Heart right ventricle (tissue), 16 donors: ENCODE measurements at regions of chrX and their contacts with region 1.

Region 1: DNA sequence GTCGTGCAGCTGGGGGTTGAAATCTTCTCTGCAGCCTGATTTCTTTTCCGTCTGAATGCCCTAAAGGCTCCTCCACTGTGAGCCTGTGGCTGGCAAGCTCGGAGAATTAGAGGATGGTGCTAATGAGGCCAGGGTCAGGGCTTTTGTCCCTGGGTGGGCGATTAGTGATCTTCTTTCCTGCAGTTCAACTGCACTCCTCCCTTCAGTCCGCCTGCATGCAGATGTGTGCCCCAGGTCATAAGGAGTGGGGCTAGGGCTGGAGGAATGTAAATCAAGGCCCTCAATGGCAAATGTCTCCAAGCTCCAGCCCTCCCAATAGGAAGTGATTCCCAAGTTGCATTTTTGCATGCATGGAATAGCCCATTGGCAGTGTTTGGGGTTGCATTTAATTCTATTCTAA is 405.0 kb downstream of the AFF2 start:
- DNase-seq: no peak
- ATAC-seq: no peak
- H3K4me3 ChIP-seq: no peak overlapping the region
- H3K27ac ChIP-seq: no peak overlapping the region
- H3K4me1 ChIP-seq: no peaks in the 10 kb centered on the region
- H3K27me3 ChIP-seq: no peaks in the 10 kb centered on the region
- CTCF ChIP-seq: no peak

Region 2: DNA sequence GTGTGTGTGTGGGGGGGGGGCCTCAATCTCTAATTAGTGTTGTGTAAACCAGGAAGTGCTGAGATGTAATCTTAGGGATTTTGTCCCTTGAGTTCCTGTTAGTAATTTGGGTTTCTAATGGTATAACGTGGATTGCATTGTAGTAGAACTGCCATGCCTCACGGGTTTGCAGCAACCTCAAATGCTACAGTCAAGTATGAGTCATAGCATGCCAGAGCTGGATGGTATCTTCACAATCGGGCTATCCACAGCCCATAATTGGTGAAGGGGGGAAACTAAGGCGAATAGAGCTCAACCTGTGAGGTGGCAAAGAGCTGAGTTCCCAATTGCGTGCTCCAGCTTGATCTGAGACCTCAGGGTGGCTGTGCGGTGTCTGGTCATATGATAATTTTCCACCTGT is 926.5 kb before region 1 on chrX:
- intact Hi-C with region 1: loop called in 1 of 10 experiments (anchors 5 kb)
- DNase-seq: no peak
- ATAC-seq: no peak
- H3K4me3 ChIP-seq: no peak overlapping the region
- H3K27ac ChIP-seq: no peak overlapping the region
- H3K4me1 ChIP-seq: no peaks in the 10 kb centered on the region
- H3K27me3 ChIP-seq: no peaks in the 10 kb centered on the region
- CTCF ChIP-seq: no peak

Region 3: GRCh38 chrX:148269513-148269912 is 635.9 kb before region 1 on chrX:
- intact Hi-C with region 1: loop called in 1 of 10 experiments (anchors 5 kb)
- DNase-seq: no peak
- ATAC-seq: no peak
- H3K4me3 ChIP-seq: no peak overlapping the region
- H3K27ac ChIP-seq: no peak overlapping the region
- H3K4me1 ChIP-seq: no peaks in the 10 kb centered on the region
- H3K27me3 ChIP-seq: no peaks in the 10 kb centered on the region
- CTCF ChIP-seq: no peak